ENCODE measurements at regions of chr11 and their contacts with region 1.

Region 1: DNA sequence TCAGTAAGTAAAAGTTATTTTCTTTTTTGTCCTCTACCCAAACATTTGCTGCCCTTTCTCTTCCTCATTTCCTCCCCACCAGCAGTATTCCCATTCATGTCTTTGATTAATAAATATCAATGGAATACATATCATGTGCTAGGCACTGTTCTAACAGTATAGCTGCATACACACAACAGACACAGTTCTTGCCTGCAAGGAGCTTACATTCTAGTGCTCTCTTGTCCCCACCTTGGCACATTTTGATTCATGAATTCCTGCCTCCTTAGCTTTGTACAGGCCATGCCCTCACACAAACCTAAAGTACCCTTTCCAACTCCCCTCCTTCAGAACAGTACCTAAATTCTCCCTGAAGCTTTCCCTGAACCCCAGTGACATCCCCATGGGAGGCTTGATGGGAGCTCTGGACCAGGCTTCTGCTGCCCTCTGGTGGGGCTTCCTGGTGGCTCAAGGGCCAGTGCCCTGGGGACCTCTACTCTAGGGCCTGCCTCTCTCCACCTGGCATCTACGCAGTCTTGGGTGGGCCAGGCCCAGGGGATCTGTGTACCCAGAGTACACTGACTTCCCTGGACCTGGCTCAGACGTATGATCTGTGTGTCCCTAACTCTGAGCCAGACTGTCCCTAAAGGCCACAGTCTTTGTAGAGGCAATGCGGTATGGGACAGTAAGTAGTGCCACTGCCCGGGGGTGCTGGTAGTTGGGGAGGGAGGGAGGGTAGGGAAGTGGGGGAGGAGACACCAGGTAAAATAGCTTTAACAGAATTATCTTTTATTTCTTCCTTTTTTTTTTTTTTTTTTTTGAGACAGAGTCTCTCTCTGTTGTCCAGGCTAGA is 14.1 kb downstream of the RPS13 start:
- DNase-seq: peak; percentile 55 to 72
- ATAC-seq: peak; percentile 72 to 96 (median 91)
- H3K4me3 ChIP-seq: no peak overlapping the region
- H3K27ac ChIP-seq: no peak overlapping the region
- H3K4me1 ChIP-seq: no peaks in the 10 kb centered on the region
- H3K27me3 ChIP-seq: no peaks in the 10 kb centered on the region
- CTCF ChIP-seq: peak; percentile 53 to 89 (median 81)

Region 2: GRCh38 chr11:16785520-16786128 is 277.8 kb before region 1 on chr11:
- intact Hi-C with region 1: loop called in 9 of 10 experiments (anchors 2 to 10 kb)
- DNase-seq: peak; percentile 36 to 79
- ATAC-seq: peak; percentile 58 to 82 (median 76)
- H3K4me3 ChIP-seq: no peak overlapping the region
- H3K27ac ChIP-seq: peak overlapping the region in 4 of 10 donors; percentile 13 to 54 (median 18)
- H3K4me1 ChIP-seq: peaks cover 0 to 66% (median 57%) of the 10 kb centered on the region in 9 donors
- H3K27me3 ChIP-seq: no peaks in the 10 kb centered on the region
- CTCF ChIP-seq: peak; percentile 82 to 93 (median 91)

Region 3: GRCh38 chr11:16809886-16810668 is 253.3 kb before region 1 on chr11:
- intact Hi-C with region 1: loop called in 2 of 10 experiments (anchors 10 kb)
- DNase-seq: peak; percentile 64 to 79
- ATAC-seq: peak; percentile 50 to 86 (median 83)
- H3K4me3 ChIP-seq: no peak overlapping the region
- H3K27ac ChIP-seq: peak overlapping the region in 9 of 10 donors; percentile 6 to 81 (median 56)
- H3K4me1 ChIP-seq: peaks cover 4 to 96% (median 62%) of the 10 kb centered on the region in 9 donors
- H3K27me3 ChIP-seq: no peaks in the 10 kb centered on the region
- CTCF ChIP-seq: no peak

Region 4: GRCh38 chr11:16820324-16821092 is 242.9 kb before region 1 on chr11:
- intact Hi-C with region 1: loop called in 3 of 10 experiments (anchors 5 to 10 kb)
- DNase-seq: peak; percentile 81 to 84
- ATAC-seq: peak; percentile 53 to 84 (median 78)
- H3K4me3 ChIP-seq: no peak overlapping the region
- H3K27ac ChIP-seq: peak overlapping the region in 8 of 10 donors; percentile 9 to 75 (median 51)
- H3K4me1 ChIP-seq: peaks cover 0 to 65% (median 50%) of the 10 kb centered on the region in 9 donors
- H3K27me3 ChIP-seq: no peaks in the 10 kb centered on the region
- CTCF ChIP-seq: peak; percentile 71 to 92 (median 86)

Region 5: DNA sequence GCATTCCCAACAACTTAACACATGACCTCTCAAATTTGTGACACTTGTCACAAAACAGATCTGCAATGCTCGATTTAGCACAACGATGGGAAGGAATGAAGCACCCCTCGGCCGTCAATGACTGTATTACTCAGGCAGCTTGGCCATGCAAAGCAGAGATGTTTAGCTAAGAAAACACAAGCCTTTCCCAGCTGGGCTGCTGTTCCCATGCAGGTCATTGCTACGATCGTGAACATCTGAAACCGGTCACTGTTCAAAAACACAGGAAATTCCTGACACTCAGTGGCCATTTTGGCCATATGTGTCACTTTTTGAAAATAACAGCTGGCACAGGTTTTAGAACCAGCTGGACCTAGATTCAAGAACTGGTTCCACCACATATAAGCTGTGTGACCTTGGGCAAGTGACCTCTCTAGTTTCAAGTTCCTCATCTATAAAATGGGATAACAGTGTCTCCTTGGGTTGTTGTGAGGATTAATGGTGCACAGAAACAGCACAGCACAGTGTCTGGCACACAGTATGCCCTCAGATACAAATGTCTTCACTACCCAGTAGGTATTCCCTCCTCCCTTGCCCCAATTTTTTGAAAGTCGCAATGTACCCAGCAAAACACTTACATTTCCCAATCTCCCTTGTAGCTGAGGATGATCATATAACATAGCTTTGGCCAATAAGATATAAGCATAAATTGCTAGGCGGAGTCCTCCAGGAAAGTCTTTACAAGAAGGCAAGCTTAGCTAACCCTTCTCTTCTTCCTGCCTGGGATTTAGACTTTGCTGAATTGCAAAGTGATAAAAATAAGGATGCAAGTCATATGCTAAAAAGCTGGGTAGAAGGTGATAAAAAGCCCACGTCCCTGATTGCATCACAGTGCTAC is 231.8 kb before region 1 on chr11:
- intact Hi-C with region 1: no loop called
- DNase-seq: no peak
- ATAC-seq: peak in 3 of 8 donors; percentile 14 to 43 (median 22)
- H3K4me3 ChIP-seq: no peak overlapping the region
- H3K27ac ChIP-seq: peak overlapping the region in 1 of 10 donors; percentile 14
- H3K4me1 ChIP-seq: peaks cover 0 to 25% (median 3%) of the 10 kb centered on the region in 9 donors
- H3K27me3 ChIP-seq: no peaks in the 10 kb centered on the region
- CTCF ChIP-seq: no peak

Region 6: GRCh38 chr11:16945671-16946469 is 117.5 kb before region 1 on chr11:
- intact Hi-C with region 1: loop called (anchors 1 to 5 kb)
- DNase-seq: peak; percentile 32 to 46
- ATAC-seq: peak; percentile 71 to 90 (median 87)
- H3K4me3 ChIP-seq: no peak overlapping the region
- H3K27ac ChIP-seq: no peak overlapping the region
- H3K4me1 ChIP-seq: peaks cover 0 to 8% (median 0%) of the 10 kb centered on the region in 9 donors
- H3K27me3 ChIP-seq: no peaks in the 10 kb centered on the region
- CTCF ChIP-seq: peak; percentile 42 to 81 (median 74)

Region 7: GRCh38 chr11:16953663-16954062 is 109.7 kb before region 1 on chr11:
- intact Hi-C with region 1: loop called in 4 of 10 experiments (anchors 2 to 5 kb)
- DNase-seq: no peak
- ATAC-seq: no peak
- H3K4me3 ChIP-seq: no peak overlapping the region
- H3K27ac ChIP-seq: no peak overlapping the region
- H3K4me1 ChIP-seq: no peaks in the 10 kb centered on the region
- H3K27me3 ChIP-seq: no peaks in the 10 kb centered on the region
- CTCF ChIP-seq: no peak

Region 8: DNA sequence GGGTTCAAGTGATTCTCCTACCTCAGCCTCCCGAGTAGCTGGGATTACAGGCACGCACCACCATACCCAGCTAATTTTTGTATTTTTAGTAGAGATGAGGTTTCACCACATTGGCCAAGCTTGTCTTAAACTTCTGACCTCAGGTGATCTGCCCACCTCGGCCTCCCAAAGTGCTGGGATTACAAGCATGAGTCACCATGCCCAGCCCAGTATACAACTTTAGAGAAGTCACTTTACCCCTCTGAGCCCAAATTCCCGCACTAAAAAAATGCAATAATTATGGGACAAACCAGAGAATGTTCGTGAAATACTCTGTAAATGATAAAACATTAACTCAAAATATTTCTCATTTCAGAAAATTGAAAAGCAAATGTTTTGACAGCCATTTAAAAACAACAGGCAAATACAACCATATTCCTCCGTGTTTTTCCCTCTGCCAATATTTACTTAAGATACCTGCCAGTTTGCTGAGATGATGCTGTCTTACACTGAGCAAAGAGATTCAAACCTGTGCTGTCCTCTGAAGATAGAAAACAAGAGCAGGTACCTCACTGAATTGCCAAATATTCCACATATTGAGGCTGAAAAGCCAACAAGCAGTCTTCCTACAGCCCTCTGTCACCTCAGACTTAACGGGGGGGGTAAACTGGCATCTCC is 58.8 kb before region 1 on chr11:
- intact Hi-C with region 1: no loop called
- DNase-seq: no peak
- ATAC-seq: no peak
- H3K4me3 ChIP-seq: no peak overlapping the region
- H3K27ac ChIP-seq: no peak overlapping the region
- H3K4me1 ChIP-seq: no peaks in the 10 kb centered on the region
- H3K27me3 ChIP-seq: no peaks in the 10 kb centered on the region
- CTCF ChIP-seq: no peak

Region 9: GRCh38 chr11:17014838-17015626 is 48.4 kb before region 1 on chr11:
- intact Hi-C with region 1: loop called in 2 of 10 experiments (anchors 10 kb)
- DNase-seq: no peak
- ATAC-seq: peak in 2 of 8 donors; percentile 42 to 43
- H3K4me3 ChIP-seq: peak overlapping the region; percentile 21 to 98 (median 68)
- H3K27ac ChIP-seq: peak overlapping the region in 2 of 10 donors; percentile 4 to 10
- H3K4me1 ChIP-seq: peaks cover 0 to 19% (median 11%) of the 10 kb centered on the region in 9 donors
- H3K27me3 ChIP-seq: peaks cover 0 to 54% (median 0%) of the 10 kb centered on the region in 7 donors
- CTCF ChIP-seq: peak in 7 of 9 donors; percentile 32 to 55 (median 48)

Region 10: DNA sequence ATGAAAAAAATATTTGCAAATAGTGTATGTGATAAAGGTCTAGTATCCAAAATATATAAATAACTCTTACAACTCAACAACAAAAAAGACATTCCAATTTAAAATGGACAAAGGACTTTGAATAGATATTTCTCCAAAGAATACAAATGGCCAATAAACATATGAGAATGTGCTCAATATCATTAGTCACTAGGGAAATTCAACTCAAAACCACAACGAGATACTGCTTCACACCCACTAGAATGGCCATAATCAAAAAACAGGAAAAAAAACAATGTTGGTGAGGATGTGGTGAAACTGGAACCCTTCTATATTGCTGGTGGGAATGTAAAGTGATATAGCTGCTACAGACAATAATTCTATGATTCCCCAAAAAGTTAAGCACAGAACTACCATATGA is 52.7 kb after region 1 on chr11:
- intact Hi-C with region 1: no loop called
- DNase-seq: no peak
- ATAC-seq: no peak
- H3K4me3 ChIP-seq: no peak overlapping the region
- H3K27ac ChIP-seq: no peak overlapping the region
- H3K4me1 ChIP-seq: no peaks in the 10 kb centered on the region
- H3K27me3 ChIP-seq: no peaks in the 10 kb centered on the region
- CTCF ChIP-seq: no peak

Region 11: GRCh38 chr11:17129003-17129402 is 65.6 kb after region 1 on chr11:
- intact Hi-C with region 1: no loop called
- DNase-seq: no peak
- ATAC-seq: no peak
- H3K4me3 ChIP-seq: no peak overlapping the region
- H3K27ac ChIP-seq: no peak overlapping the region
- H3K4me1 ChIP-seq: no peaks in the 10 kb centered on the region
- H3K27me3 ChIP-seq: no peaks in the 10 kb centered on the region
- CTCF ChIP-seq: no peak

Measured in heart right ventricle (tissue), 16 donors.